ENCODE measurements at regions of chr1 and their contacts with region 1.

Region 1: DNA sequence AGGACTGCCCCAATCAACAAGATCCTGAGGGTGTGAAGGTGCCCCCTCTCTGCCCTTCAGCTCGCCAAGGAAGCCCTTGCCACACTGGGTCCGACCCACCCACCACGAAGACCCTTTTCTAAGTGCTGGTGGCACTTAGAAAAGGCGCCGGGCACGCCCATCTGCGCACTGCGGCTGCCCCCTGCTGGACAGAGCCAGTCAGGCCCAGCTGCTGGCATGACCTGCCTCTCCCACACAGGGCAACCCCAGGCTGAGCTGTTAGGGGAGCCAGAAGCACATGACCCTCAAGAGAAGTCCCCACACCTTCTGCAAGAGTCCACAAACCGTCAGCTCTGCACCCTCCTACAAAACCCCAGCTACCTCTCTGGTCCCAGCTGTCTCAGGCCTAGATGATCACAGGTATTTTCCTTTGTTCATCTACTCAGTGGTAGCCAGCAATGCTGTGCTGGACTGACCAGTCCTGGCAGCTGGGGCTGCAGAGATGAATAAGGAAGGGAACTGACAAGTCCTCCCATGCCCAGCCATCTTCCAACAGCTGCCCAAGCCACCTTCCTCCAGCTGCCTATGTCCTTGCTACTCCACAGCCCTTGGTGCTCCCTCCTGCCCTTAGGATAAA is 40.0 kb upstream of the ZC3H12A start:
- DNase-seq: peak; percentile 66 to 80 (median 77)
- ATAC-seq: peak; percentile 85
- H3K4me3 ChIP-seq: no peak overlapping the region
- H3K4me1 ChIP-seq: no peaks in the 10 kb centered on the region
- CTCF ChIP-seq: peak; percentile 90

Region 2: DNA sequence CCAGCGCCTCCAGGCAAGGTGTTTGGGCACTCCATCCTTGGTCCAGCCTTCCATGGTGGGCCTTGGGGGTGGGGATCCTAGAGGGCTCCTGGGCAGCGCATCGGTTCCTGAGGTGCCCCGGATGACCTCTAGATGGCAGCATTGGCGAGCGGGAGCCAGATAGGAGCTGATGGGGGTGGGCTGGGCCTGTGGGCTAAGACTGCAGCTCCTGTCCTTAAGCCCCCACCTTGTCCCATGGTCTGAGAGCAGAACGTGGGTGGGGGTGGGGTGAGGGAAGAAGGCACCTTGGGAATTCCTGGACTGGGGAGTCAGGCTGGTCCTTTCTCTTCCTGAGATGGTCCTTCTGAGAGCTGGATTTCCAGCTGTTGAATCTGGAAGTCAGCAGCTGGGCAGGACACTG is 858.3 kb before region 1 on chr1:
- intact Hi-C with region 1: loop called in 1 of 2 experiments (anchors 5 kb)
- DNase-seq: peak in 2 of 3 donors; percentile 40 to 53
- ATAC-seq: peak; percentile 46
- H3K4me3 ChIP-seq: no peak overlapping the region
- H3K4me1 ChIP-seq: no peaks in the 10 kb centered on the region
- CTCF ChIP-seq: peak; percentile 50

Region 3: DNA sequence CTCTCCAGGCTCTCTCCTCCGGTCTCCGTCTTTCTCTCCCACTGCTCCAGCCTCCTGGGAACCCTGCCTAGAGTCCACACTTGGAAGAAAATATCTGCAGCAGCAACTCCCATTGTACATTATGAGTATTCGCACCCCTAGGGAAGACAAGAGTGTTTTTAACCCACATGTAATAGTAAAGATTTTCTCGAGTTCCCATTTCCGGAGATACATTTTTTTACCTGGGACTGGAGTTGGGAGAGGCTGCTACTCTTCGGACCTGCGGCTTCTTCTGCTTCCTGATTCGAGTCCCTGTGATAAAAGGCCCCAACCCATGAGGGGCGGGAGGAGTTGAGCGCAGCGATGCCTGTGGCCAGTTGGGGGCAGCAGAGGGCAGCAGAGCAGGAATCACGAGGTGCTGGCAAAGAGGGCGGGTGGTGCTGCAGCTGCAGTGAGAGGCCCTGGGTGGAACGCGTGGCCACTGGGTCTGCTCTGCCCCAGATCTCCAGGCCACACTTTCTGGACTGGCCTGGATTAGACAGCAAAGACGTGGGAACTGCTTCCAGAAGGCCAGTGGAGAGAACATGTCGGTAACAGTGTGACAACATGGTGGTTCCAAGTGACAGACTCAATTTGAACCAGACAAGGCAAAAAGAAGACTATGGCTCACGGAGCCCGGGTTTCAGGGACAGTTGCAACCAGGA is 730.7 kb before region 1 on chr1:
- intact Hi-C with region 1: loop called in 1 of 2 experiments (anchors 5 kb)
- DNase-seq: peak; percentile 67 to 81 (median 78)
- ATAC-seq: peak; percentile 95
- H3K4me3 ChIP-seq: no peak overlapping the region
- H3K4me1 ChIP-seq: no peaks in the 10 kb centered on the region
- CTCF ChIP-seq: peak; percentile 88

Region 4: GRCh38 chr1:37498872-37499617 is 64.6 kb after region 1 on chr1:
- intact Hi-C with region 1: no loop called
- DNase-seq: peak in 1 of 3 donors; percentile 63
- ATAC-seq: peak; percentile 97
- H3K4me3 ChIP-seq: no peak overlapping the region
- H3K4me1 ChIP-seq: peaks cover 6% of the 10 kb centered on the region
- CTCF ChIP-seq: no peak

Region 5: DNA sequence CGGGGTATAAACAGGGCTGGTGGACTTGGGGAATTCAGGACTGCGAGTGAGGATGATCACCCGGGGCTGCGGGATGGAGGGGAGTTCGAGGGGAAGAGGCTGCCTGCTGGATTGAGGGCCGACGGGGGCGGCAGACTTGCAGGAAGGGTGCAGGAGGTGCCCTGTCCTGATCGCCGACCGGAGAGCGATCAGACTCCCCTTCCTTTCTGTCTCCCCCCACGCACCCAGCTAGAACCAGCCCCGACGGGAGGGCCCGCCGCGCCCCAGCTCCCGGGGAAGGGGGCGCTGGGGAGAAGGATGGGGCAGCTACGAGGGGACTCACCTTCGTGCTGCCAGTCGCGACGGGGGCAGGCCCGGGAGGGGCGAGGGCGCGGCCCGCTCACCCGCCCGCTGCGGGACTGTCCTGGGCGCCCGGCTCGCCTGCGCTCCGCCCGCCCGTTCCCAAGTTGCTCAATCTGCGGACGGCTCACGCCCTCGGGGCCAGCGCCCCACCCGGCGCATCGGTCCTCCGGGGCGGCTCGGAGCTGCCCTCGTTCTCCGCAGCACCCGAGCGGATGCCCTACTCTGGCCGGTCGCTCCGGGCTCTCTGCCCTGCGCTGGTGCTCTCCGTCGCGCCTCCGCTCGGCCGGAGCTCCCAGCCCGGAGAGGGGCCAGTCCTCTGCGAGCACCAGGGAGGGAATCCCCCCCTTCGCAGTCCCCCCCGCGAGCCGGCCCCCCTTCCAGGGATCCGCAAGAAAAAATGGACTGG is 200.0 kb after region 1 on chr1 and contains the start of gene RSPO1:
- intact Hi-C with region 1: no loop called
- DNase-seq: peak in 2 of 3 donors; percentile 13 to 35
- ATAC-seq: peak; percentile 78
- H3K4me3 ChIP-seq: no peak within 1 kb of the TSS
- H3K4me1 ChIP-seq: peaks cover 6% of the 10 kb centered on the region
- CTCF ChIP-seq: no peak
- total RNA-seq, gene RSPO1: 0.12 to 1.7 (median 0.53) TPM